CD4-positive, alpha-beta memory T cell (primary cell): ENCODE measurements at regions of chr16 and their contacts with region 1.

Region 1: DNA sequence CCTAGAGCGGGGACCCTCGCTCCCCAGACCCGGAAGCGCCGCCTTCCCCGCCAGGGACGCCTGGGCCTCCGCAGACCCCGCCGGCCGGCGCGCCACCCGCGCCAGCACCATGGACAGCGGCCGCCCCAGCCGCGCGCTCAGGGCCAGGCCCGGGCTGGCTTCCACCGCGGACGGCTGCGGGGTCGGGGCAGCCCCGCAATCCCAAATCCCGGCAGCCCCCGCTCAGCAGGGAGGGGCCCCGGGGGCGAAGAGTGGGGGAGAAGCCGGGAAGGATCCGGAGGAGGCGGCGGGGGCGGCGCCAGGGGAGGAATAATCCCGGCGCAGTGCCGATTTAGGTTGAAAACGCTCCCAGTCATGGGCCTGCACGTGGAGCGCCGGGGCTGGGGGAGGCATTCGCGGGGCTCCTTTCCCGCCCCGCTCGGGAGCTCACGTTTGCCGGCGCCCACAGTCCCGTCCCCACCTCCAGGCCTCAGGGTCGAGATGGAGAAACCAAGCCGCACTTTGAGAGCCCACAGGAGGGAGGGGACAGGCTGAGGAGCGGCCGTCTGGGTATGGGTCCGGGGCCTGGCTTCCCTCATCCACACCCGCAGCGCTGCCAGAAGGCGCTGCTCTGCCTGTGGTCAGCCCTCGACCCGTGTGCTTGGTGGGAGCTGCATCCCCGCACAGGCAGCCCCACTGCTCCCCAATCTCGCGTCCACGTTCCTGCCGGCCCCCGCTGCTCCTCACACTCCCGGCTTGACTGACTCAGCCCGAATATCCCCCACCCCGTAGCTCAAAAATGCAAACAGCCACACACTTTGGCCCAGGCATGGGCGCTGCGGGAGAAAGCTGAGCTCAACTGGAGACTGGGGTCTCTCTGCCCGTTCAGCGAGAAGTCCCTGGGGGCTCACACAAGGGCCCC is 4.7 kb downstream of the FBXL16 start:
- DNase-seq: peak in 4 of 5 donors; percentile 54 to 65 (median 59)
- H3K4me3 ChIP-seq: no peak overlapping the region
- H3K4me3 Mint-ChIP-seq: peak overlapping the region in 1 of 8 donors; percentile 29
- H3K27ac ChIP-seq: no peak overlapping the region
- H3K27ac Mint-ChIP-seq: no peak overlapping the region
- H3K4me1 ChIP-seq: peaks cover 46% of the 10 kb centered on the region
- H3K4me1 Mint-ChIP-seq: peaks cover 2 to 39% (median 8%) of the 10 kb centered on the region in 4 donors
- H3K27me3 ChIP-seq: peaks cover 18% of the 10 kb centered on the region
- H3K27me3 Mint-ChIP-seq: peaks cover 8 to 9% of the 10 kb centered on the region in 2 donors

Region 2: DNA sequence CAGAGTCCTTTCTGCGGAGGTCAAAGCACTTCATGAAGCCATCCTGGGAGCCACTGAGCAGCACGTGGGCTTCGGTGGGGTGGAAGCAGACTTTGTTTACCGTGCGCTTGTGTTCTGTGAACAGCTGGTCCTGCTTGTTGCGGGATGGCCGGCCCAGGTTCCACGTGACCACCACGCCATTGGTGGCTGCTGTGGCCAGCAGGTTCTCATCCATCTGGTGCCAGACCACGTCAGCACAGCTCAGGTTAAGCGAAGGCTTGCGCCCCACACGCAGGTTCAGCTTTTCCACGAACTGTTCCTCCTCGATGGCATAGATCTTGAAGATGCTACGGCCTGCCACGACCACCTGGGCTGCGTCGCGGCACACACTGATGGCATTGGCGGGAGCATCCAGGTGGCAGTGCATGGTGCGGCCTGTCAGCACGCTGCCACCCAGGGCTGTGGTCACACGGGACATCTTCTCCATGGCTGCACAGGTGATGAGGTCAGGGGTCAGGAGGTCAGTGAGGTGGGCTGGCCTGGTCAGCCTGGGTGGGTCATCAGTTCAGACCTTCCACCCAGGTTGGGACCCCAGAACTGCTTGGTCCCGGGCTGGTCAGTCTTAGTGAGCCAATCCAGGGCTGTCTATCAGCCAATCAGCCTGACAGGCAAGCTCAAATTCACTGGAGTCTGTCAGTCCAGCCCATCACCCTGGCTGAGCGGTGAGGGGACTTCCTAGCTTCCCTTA is 11.6 kb before region 1 on chr16:
- CTCF ChIA-PET with region 1: interaction called, 4 read pairs
- POLR2A ChIA-PET with region 1: interaction called, 212 read pairs
- intact Hi-C with region 1: no loop called
- DNase-seq: no peak
- H3K4me3 ChIP-seq: peak overlapping the region; percentile 70 to 93
- H3K4me3 Mint-ChIP-seq: peak overlapping the region; percentile 89 to 94 (median 90)
- H3K27ac ChIP-seq: peak overlapping the region; percentile 64
- H3K27ac Mint-ChIP-seq: peak overlapping the region; percentile 88 to 93 (median 92)
- H3K4me1 ChIP-seq: peaks cover 38% of the 10 kb centered on the region
- H3K4me1 Mint-ChIP-seq: peaks cover 10 to 41% (median 27%) of the 10 kb centered on the region in 4 donors
- H3K27me3 ChIP-seq: no peaks in the 10 kb centered on the region
- H3K27me3 Mint-ChIP-seq: no peaks in the 10 kb centered on the region

Region 3: DNA sequence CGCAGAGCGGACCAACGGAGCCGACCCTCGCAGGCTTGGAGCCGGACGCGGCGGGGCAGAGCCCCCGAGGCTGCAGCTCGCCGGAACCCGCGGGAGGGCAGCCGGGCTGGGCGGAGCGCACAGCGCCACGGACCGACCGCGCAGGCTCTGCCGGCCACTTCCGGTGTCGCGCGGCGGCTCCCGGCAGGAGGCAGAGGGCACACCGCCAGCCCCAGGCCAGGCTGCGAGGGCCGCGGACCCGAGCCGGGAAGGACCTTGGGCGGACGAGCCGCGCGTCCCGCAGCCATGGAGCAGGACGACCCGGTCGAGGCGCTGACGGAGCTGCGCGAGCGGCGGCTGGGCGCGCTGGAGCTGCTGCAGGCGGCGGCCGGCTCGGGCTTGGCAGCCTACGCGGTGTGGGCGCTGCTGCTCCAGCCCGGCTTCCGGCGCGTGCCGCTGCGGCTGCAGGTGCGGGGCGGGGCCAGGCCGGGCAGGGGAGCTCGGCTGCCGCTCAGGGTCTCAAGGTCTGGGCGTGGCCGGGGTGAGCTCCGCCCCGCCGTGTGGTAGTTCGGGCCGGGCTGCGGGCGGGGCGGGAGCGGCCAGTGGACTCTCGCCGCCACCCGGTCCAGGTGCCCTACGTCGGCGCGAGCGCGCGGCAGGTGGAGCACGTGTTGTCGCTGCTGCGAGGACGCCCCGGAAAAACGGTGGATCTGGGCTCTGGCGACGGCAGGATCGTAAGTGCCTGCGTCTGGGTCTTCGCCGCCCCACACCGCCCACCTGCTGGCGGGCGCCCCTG is 20.2 kb after region 1 on chr16 and contains the start of gene ANTKMT:
- CTCF ChIA-PET with region 1: interaction called, 3 read pairs
- POLR2A ChIA-PET with region 1: interaction called, 166 read pairs
- intact Hi-C with region 1: no loop called
- DNase-seq: peak; percentile 71 to 79 (median 77)
- H3K4me3 ChIP-seq: peak within 1 kb of the TSS; percentile 42 to 60
- H3K4me3 Mint-ChIP-seq: peak within 1 kb of the TSS; percentile 80 to 88 (median 84)
- H3K27ac ChIP-seq: peak within 1 kb of the TSS; percentile 47
- H3K27ac Mint-ChIP-seq: peak within 1 kb of the TSS; percentile 47 to 91 (median 84)
- H3K4me1 ChIP-seq: peaks cover 30% of the 10 kb centered on the region
- H3K4me1 Mint-ChIP-seq: peaks cover 3 to 33% (median 12%) of the 10 kb centered on the region in 4 donors
- H3K27me3 ChIP-seq: no peaks in the 10 kb centered on the region
- H3K27me3 Mint-ChIP-seq: no peaks in the 10 kb centered on the region
- total RNA-seq, gene ANTKMT: 21.5 to 23.5 TPM